Common myeloid progenitor, CD34-positive (primary cell): ENCODE measurements at regions of chr13 and their contacts with region 1.

Region 1: GRCh38 chr13:45310341-45311125 is 30.4 kb downstream of the TPT1 start:
- DNase-seq: no peak
- H3K4me3 ChIP-seq: peak overlapping the region in 6 of 7 experiments; percentile 43 to 77 (median 64)
- H3K27ac ChIP-seq: no peak overlapping the region
- H3K4me1 ChIP-seq: peaks cover 6 to 18% (median 15%) of the 10 kb centered on the region in 4 experiments
- H3K27me3 ChIP-seq: no peaks in the 10 kb centered on the region

Region 2: DNA sequence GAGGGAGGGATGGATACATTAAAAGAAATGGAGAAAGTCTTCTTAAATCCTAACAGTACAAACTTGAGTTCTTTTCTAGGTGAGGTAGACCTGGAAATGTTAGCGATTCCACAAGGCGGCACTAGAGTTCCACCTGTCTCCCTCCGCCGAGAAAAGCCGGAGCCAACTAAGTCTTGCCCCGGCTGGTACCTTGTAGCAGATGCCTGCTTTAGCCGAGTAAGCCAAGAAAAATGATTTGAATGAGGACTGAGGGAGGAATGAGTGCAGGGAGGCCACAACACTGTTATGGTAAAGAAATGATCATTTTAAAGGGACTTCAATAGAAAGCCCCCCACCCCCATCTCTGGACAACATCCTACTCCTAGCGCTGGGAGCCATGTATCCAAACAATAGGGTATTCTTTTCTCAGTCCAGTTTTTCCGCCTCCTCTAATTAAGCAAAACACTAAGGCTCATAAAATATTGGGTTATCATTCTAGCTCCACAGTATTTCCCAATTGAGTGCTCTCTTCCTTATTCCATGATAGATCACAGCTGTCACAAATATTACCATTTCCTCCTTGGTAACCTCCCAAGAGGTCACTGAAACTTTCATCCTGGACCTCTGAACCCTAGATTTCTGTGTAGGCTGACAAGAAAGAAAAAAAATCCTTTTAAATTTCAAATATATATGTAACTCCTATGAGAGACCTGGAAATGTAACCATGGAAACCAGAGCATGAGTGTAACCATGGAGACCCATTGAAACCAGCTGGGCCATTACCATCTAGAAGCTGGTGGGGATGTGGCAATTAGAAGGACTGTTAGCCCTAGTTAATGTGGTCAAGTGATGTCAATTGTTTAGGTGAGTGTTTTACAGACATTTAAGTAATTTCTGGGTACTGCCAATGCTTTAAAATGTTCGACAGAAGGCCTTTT is 262.9 kb before region 1 on chr13:
- CTCF ChIA-PET with region 1: interaction called, 24 read pairs
- POLR2A ChIA-PET with region 1: no interaction called
- DNase-seq: peak; percentile 79 to 91 (median 86)
- H3K4me3 ChIP-seq: peak overlapping the region in 6 of 7 experiments; percentile 63 to 89 (median 72)
- H3K27ac ChIP-seq: no peak overlapping the region
- H3K4me1 ChIP-seq: peaks cover 0 to 4% (median 1%) of the 10 kb centered on the region in 4 experiments
- H3K27me3 ChIP-seq: no peaks in the 10 kb centered on the region

Region 3: GRCh38 chr13:45102136-45102507 is 208.4 kb before region 1 on chr13:
- CTCF ChIA-PET with region 1: no interaction called
- POLR2A ChIA-PET with region 1: no interaction called
- DNase-seq: no peak
- H3K4me3 ChIP-seq: no peak overlapping the region
- H3K27ac ChIP-seq: no peak overlapping the region
- H3K4me1 ChIP-seq: no peaks in the 10 kb centered on the region
- H3K27me3 ChIP-seq: no peaks in the 10 kb centered on the region

Region 4: GRCh38 chr13:45292176-45292575 is 18.4 kb before region 1 on chr13:
- CTCF ChIA-PET with region 1: interaction called, 29 read pairs
- POLR2A ChIA-PET with region 1: no interaction called
- DNase-seq: no peak
- H3K4me3 ChIP-seq: no peak overlapping the region
- H3K27ac ChIP-seq: no peak overlapping the region
- H3K4me1 ChIP-seq: peaks cover 0 to 7% (median 3%) of the 10 kb centered on the region in 4 experiments
- H3K27me3 ChIP-seq: no peaks in the 10 kb centered on the region

Region 5: DNA sequence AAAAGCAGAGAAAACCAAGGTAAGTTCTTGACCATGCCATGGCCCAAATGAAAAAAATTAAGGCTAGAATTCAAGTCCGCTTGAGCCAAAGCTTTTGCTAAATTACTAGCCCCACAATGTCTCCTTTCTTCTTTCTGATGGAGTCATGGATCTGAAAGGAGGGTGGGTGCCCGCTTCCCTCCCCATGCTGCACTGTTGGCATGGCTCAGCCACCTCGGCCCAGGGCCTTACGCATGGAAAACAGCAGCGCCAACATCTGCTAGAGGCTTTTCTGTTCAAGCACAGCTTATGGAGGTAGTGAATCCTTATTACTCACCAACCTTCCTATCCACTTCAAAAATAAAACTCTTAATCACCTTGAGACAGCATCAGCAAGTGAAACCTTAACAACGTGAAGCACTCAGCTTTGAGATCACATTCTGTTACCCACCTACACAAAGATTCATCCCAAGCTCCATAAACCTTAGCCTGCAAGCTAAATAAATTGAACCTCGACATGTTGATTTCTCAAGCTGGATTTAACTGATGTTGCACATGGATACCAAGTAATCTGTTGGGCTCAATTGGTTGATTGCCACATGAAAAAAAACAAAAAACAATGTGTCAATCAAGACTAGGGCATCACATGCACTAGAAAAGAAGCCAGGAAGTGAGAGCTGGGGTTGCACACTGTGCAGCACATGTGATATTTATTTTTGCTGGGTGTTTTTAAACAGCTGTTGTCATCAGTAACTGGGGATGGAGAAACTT is 12.9 kb before region 1 on chr13:
- CTCF ChIA-PET with region 1: interaction called, 29 read pairs
- POLR2A ChIA-PET with region 1: no interaction called
- DNase-seq: no peak
- H3K4me3 ChIP-seq: no peak overlapping the region
- H3K27ac ChIP-seq: no peak overlapping the region
- H3K4me1 ChIP-seq: peaks cover 0 to 7% (median 3%) of the 10 kb centered on the region in 4 experiments
- H3K27me3 ChIP-seq: peaks cover 0 to 6% (median 5%) of the 10 kb centered on the region in 5 experiments

Region 6: DNA sequence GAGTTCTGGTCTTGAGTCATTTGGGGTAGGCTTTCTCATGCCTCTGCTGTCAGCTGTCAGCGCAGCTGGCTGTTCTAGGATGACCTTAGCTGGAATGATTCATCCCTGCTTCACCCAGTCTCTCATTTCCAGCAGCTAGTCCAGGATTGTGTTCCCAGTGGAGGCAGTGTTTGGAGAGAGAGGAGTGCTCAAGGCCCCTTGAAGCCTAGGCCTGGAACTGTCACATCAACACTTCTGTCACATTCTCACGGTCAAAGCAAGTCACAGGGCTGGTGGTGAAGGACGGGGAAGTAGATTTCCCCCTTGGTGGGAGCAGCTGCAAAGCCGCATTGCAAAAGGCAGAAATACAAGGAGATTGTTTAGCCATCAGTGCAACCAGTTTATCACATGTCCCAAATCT is 15.3 kb after region 1 on chr13:
- CTCF ChIA-PET with region 1: interaction called, 11 read pairs
- POLR2A ChIA-PET with region 1: no interaction called
- DNase-seq: peak in 2 of 3 donors; percentile 64 to 74
- H3K4me3 ChIP-seq: no peak overlapping the region
- H3K27ac ChIP-seq: no peak overlapping the region
- H3K4me1 ChIP-seq: peaks cover 19 to 74% (median 56%) of the 10 kb centered on the region in 4 experiments
- H3K27me3 ChIP-seq: no peaks in the 10 kb centered on the region

Region 7: GRCh38 chr13:45340422-45340925 is 29.9 kb after region 1 on chr13:
- CTCF ChIA-PET with region 1: interaction called, 31 read pairs
- POLR2A ChIA-PET with region 1: interaction called, 3 read pairs
- DNase-seq: peak; percentile 84 to 91 (median 89)
- H3K4me3 ChIP-seq: peak overlapping the region; percentile 79 to 93 (median 91)
- H3K27ac ChIP-seq: peak overlapping the region; percentile 96 to 98
- H3K4me1 ChIP-seq: peaks cover 25 to 58% (median 51%) of the 10 kb centered on the region in 4 experiments
- H3K27me3 ChIP-seq: no peaks in the 10 kb centered on the region

Region 8: DNA sequence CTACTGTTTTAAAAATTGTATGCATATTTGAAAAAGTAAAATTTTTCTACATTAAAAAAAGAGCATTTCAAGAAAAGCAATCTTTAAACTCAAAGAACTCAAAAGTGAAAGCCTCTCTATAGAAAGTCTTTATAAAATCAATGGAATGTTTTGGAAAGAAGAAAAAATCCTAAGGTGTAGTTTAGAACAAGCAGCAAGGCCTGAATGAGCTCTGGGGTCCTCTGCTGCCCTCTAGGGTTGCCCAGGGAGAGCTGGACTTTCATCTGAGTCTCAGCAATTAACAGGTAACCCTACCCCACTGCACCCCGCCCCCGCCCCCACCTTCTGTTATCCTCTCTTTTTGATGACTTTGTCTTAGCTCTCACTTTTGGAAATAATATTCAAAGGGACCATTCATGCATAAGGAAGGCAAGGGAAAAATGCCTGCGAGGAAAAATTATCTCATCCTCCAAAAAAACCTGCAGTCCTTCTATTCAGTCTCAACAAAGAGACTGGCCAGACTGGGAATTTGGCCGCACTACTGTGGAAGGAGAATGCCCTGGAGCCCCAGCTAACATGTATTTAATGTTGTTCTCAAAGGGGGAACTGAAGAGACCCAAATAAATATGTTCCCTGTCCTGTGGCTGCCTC is 83.5 kb after region 1 on chr13:
- CTCF ChIA-PET with region 1: interaction called, 12 read pairs
- POLR2A ChIA-PET with region 1: no interaction called
- DNase-seq: peak; percentile 68 to 76 (median 71)
- H3K4me3 ChIP-seq: peak overlapping the region in 2 of 7 experiments; percentile 26 to 44
- H3K27ac ChIP-seq: no peak overlapping the region
- H3K4me1 ChIP-seq: peaks cover 25 to 61% (median 49%) of the 10 kb centered on the region in 4 experiments
- H3K27me3 ChIP-seq: no peaks in the 10 kb centered on the region